Activated T-helper 2 cell treated with anti-CD3 and anti-CD28 coated beads, Interferon-gamma antibody, Interleukin-2, Interleukin-4, amounts not matched to agents 10 μg/mL and 5 μg/mL and 100 μg/mL, durations not matched to agents 14 hours and 24 hours and 36 hours (primary cell): ENCODE measurements at regions of chr5 and their contacts with region 1.

Region 1: DNA sequence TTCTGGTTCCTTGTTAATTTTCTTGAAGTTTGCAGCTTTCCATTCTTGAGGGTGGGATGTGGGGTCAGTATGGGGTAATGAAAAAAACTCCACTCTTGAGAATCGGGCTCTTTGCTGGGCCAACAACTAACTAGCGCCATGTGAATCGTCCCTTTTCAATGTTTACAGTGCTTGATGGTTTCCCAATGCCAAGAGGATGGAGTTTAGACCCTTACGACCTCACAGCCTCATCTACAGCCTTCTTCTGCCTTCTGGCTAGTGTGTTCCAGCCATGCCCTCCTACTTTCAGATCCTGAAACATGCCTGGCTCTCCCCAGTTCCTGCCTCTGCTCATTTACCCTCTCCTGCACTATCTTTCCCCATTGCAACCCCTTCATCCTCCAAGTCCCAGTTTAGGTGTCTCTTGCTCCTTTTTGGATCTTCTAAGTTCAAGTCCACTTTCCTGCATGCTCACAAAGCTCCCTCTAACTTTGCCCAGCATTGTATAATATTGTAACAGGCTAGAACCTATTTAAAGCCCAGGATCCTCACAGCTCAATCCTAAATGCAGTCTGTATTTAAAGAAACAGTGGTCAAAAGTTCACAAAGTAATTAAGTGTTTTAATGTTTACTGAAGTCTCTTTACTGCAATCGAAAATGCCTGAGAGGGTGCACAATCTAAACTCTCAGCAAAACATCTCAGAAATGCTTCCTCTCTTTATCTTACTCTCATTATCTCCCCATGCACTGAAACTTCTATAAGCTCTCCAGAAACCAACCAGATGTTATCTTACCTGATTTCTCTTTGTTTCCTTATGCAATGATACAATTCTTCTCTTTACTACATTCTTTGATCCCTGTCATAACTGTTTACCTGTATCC is 20.6 kb upstream of the CAST start:
- DNase-seq: no peak
- H3K4me3 Mint-ChIP-seq: no peak overlapping the region
- H3K27ac Mint-ChIP-seq: no peak overlapping the region
- H3K4me1 Mint-ChIP-seq: peaks cover 11% of the 10 kb centered on the region
- H3K27me3 Mint-ChIP-seq: peaks cover 45% of the 10 kb centered on the region

Region 2: GRCh38 chr5:96657087-96657665 is 15.6 kb after region 1 on chr5:
- intact Hi-C with region 1: loop called (anchors 1 kb)
- DNase-seq: peak; percentile 58
- H3K4me3 Mint-ChIP-seq: no peak overlapping the region
- H3K27ac Mint-ChIP-seq: no peak overlapping the region
- H3K4me1 Mint-ChIP-seq: peaks cover 52% of the 10 kb centered on the region
- H3K27me3 Mint-ChIP-seq: peaks cover 53% of the 10 kb centered on the region

Region 3: GRCh38 chr5:96668725-96669124 is 27.1 kb after region 1 on chr5:
- intact Hi-C with region 1: no loop called
- DNase-seq: no peak
- H3K4me3 Mint-ChIP-seq: no peak overlapping the region
- H3K27ac Mint-ChIP-seq: no peak overlapping the region
- H3K4me1 Mint-ChIP-seq: peaks cover 33% of the 10 kb centered on the region
- H3K27me3 Mint-ChIP-seq: peaks cover 5% of the 10 kb centered on the region